ENCODE measurements at regions of chr11 and their contacts with region 1.

Region 1: DNA sequence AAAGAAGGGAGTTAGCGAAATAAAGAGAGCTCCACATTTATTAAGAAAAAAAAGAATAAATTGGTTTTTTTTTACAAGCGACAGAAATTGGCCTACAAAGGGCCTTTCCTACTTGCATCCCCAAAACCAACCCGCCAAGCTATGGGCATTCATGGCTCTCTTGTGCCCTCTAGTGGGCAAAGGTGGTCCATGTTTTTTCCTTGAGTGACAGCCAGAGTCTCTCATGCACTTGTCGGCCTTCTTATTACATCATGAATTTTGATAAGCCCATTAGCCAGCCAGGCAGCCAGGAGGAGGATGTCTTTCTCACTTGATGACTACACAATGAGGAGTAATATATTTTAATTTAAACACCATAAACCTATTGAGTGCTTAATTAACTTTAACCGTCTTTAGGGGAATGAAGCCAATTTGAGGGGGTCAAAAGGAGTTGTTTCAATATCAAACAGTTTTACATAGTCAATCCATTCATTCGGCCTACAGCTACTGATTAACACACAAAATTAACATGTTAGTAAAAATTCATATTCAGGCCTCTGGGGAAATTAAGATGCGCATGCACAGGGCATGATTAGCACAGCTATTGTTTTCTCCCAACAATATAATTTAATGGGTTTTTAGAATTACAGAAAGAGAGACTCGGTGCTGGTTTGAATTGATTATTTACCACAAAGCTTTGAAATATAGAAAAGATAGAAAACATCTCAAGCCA is 85.5 kb downstream of the RCN1 start:
- DNase-seq: peak; percentile 66 to 77 (median 74)
- H3K4me3 ChIP-seq: no peak overlapping the region
- H3K4me3 Mint-ChIP-seq: no peak overlapping the region
- H3K27ac ChIP-seq: no peak overlapping the region
- H3K27ac Mint-ChIP-seq: no peak overlapping the region
- H3K4me1 ChIP-seq: no peaks in the 10 kb centered on the region
- H3K4me1 Mint-ChIP-seq: peaks cover 1 to 9% (median 4%) of the 10 kb centered on the region in 4 donors
- H3K27me3 ChIP-seq: no peaks in the 10 kb centered on the region
- H3K27me3 Mint-ChIP-seq: peaks cover 2 to 17% of the 10 kb centered on the region in 2 donors

Region 2: DNA sequence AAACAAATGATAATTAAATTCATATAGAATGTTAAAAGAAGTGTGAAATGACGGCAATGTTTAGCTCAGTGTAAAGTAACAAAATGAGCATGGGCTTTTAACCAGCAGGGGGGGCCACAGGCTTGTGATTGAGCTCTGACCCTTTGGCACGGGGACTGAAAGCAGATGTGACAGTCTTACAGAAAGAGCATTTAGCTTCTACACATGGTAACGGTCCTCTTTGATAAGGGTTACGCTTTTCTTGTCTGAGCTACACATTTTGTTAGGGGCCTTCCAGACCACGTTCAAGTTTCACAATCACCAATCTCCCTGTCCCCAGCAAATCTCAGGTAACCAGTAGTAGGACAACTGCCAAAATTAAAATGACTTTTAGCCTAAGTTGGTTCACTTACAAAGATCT is 1069.3 kb before region 1 on chr11:
- CTCF ChIA-PET with region 1: interaction called, 22 read pairs
- POLR2A ChIA-PET with region 1: no interaction called
- intact Hi-C with region 1: loop called (anchors 1 kb)
- DNase-seq: peak in 4 of 5 donors; percentile 8 to 34 (median 24)
- H3K4me3 ChIP-seq: no peak overlapping the region
- H3K4me3 Mint-ChIP-seq: no peak overlapping the region
- H3K27ac ChIP-seq: no peak overlapping the region
- H3K27ac Mint-ChIP-seq: peak overlapping the region in 1 of 7 donors; percentile 63
- H3K4me1 ChIP-seq: no peaks in the 10 kb centered on the region
- H3K4me1 Mint-ChIP-seq: peaks cover 0 to 2% (median 0%) of the 10 kb centered on the region in 4 donors
- H3K27me3 ChIP-seq: no peaks in the 10 kb centered on the region
- H3K27me3 Mint-ChIP-seq: peaks cover 0 to 4% of the 10 kb centered on the region in 2 donors

Region 3: GRCh38 chr11:31397239-31397834 is 779.0 kb before region 1 on chr11:
- CTCF ChIA-PET with region 1: interaction called, 12 read pairs
- POLR2A ChIA-PET with region 1: no interaction called
- intact Hi-C with region 1: loop called (anchors 1 kb)
- DNase-seq: peak in 4 of 5 donors; percentile 11 to 26 (median 20)
- H3K4me3 ChIP-seq: no peak overlapping the region
- H3K4me3 Mint-ChIP-seq: no peak overlapping the region
- H3K27ac ChIP-seq: no peak overlapping the region
- H3K27ac Mint-ChIP-seq: no peak overlapping the region
- H3K4me1 ChIP-seq: no peaks in the 10 kb centered on the region
- H3K4me1 Mint-ChIP-seq: peaks cover 0 to 14% (median 4%) of the 10 kb centered on the region in 4 donors
- H3K27me3 ChIP-seq: no peaks in the 10 kb centered on the region
- H3K27me3 Mint-ChIP-seq: no peaks in the 10 kb centered on the region

Region 4: GRCh38 chr11:31921081-31921480 is 255.3 kb before region 1 on chr11:
- CTCF ChIA-PET with region 1: no interaction called
- POLR2A ChIA-PET with region 1: no interaction called
- intact Hi-C with region 1: no loop called
- DNase-seq: no peak
- H3K4me3 ChIP-seq: no peak overlapping the region
- H3K4me3 Mint-ChIP-seq: no peak overlapping the region
- H3K27ac ChIP-seq: no peak overlapping the region
- H3K27ac Mint-ChIP-seq: no peak overlapping the region
- H3K4me1 ChIP-seq: no peaks in the 10 kb centered on the region
- H3K4me1 Mint-ChIP-seq: no peaks in the 10 kb centered on the region
- H3K27me3 ChIP-seq: no peaks in the 10 kb centered on the region
- H3K27me3 Mint-ChIP-seq: peaks cover 4 to 12% of the 10 kb centered on the region in 2 donors

Region 5: DNA sequence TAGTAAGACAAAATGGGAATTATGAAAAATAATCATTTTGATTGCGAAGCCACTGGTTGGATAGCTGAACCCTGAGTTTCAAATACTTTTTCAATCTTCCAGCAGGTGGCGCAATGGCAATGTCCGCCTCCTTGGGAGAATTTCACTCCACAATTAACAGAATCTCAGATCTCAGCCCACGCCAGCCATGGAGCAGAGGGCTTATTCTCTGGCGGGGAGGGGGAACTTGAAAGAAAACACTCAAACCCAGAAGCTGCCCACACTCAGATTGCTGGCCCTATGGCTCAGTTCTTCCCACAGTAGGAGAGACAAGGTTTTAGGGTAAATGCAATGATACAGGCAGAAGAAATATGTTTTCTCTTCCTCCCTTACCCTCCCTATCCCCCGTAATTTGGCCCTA is 124.2 kb before region 1 on chr11:
- CTCF ChIA-PET with region 1: interaction called, 206 read pairs
- POLR2A ChIA-PET with region 1: no interaction called
- intact Hi-C with region 1: loop called (anchors 1 kb)
- DNase-seq: peak; percentile 25 to 48 (median 41)
- H3K4me3 ChIP-seq: no peak overlapping the region
- H3K4me3 Mint-ChIP-seq: no peak overlapping the region
- H3K27ac ChIP-seq: no peak overlapping the region
- H3K27ac Mint-ChIP-seq: no peak overlapping the region
- H3K4me1 ChIP-seq: no peaks in the 10 kb centered on the region
- H3K4me1 Mint-ChIP-seq: no peaks in the 10 kb centered on the region
- H3K27me3 ChIP-seq: no peaks in the 10 kb centered on the region
- H3K27me3 Mint-ChIP-seq: peaks cover 17 to 26% of the 10 kb centered on the region in 2 donors

Region 6: GRCh38 chr11:32162351-32162750 is 14.0 kb before region 1 on chr11:
- CTCF ChIA-PET with region 1: interaction called, 50 read pairs
- POLR2A ChIA-PET with region 1: no interaction called
- intact Hi-C with region 1: no loop called
- DNase-seq: no peak
- H3K4me3 ChIP-seq: no peak overlapping the region
- H3K4me3 Mint-ChIP-seq: no peak overlapping the region
- H3K27ac ChIP-seq: no peak overlapping the region
- H3K27ac Mint-ChIP-seq: no peak overlapping the region
- H3K4me1 ChIP-seq: no peaks in the 10 kb centered on the region
- H3K4me1 Mint-ChIP-seq: no peaks in the 10 kb centered on the region
- H3K27me3 ChIP-seq: peaks cover 5% of the 10 kb centered on the region
- H3K27me3 Mint-ChIP-seq: peaks cover 7 to 18% of the 10 kb centered on the region in 2 donors

Region 7: DNA sequence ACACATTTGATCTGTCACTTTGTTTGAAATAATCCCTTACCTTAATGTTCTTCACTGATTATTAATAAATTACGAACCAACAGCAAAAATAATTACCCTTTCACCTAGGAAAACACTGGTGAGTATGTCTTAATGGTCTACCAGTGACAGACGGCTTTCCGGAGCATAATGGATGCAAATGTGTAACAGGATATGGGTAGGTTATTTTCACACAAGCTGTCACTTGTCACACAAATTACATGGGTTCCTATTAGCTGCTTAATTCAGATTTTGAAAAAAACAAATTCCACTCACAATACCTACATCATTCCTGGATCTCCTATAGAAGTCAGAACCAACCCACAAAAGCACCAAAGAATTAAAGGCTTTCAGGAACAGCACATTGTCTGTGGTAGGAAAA is 131.1 kb after region 1 on chr11:
- CTCF ChIA-PET with region 1: no interaction called
- POLR2A ChIA-PET with region 1: no interaction called
- intact Hi-C with region 1: no loop called
- DNase-seq: no peak
- H3K4me3 ChIP-seq: no peak overlapping the region
- H3K4me3 Mint-ChIP-seq: no peak overlapping the region
- H3K27ac ChIP-seq: no peak overlapping the region
- H3K27ac Mint-ChIP-seq: no peak overlapping the region
- H3K4me1 ChIP-seq: no peaks in the 10 kb centered on the region
- H3K4me1 Mint-ChIP-seq: no peaks in the 10 kb centered on the region
- H3K27me3 ChIP-seq: no peaks in the 10 kb centered on the region
- H3K27me3 Mint-ChIP-seq: peaks cover 6 to 7% of the 10 kb centered on the region in 2 donors